ENCODE measurements at regions of chr12 and their contacts with region 1.

Region 1: DNA sequence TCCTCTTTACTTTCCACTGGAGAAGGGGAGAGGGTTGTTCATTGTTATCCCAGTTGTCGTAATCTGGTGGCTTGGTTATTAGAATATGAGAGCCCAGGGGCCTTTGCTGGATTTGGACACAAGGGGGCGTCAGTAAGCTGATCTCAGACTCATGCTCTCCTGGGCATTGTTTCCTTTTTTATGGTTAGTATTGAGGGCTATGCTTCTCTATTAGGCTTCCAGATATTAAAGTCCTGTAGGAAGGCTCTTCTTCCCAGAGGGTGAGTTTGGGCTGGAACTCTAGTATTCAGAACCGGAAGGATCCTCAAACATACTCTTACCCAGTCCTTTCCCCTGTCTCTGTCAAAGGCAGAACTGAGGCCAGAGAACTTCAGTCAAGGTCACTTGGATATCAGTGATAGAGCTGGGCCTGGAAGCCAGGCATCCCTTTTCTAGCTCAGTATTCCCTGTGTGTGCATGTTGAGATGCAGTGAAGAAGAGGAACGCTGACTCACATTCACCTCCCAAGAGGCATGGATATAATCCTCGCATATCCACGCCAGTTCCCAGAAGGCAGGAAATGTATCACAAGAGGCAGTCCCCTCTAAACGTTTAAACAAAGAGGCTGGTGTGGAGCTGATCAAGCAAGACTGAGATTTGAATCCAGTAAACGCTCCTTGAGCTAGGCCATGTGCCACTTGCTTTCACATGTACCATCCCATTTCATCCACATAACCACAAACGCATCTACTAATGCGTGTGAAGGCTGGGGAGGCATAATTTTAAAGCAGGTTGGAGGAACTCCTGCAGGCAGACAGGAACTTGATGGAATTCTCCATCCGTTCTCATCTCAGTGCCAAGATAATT is 41.6 kb downstream of the UBE3B start:
- DNase-seq: peak in 1 of 2 donors; percentile 42
- ATAC-seq: peak; percentile 72 to 82
- H3K4me3 ChIP-seq: no peak overlapping the region
- H3K27ac ChIP-seq: peak overlapping the region; percentile 10 to 64 (median 46)
- H3K4me1 ChIP-seq: peaks cover 0 to 8% of the 10 kb centered on the region in 2 donors
- H3K27me3 ChIP-seq: no peaks in the 10 kb centered on the region
- CTCF ChIP-seq: peak; percentile 39 to 80 (median 62)
- POLR2A ChIP-seq: no peak

Region 2: DNA sequence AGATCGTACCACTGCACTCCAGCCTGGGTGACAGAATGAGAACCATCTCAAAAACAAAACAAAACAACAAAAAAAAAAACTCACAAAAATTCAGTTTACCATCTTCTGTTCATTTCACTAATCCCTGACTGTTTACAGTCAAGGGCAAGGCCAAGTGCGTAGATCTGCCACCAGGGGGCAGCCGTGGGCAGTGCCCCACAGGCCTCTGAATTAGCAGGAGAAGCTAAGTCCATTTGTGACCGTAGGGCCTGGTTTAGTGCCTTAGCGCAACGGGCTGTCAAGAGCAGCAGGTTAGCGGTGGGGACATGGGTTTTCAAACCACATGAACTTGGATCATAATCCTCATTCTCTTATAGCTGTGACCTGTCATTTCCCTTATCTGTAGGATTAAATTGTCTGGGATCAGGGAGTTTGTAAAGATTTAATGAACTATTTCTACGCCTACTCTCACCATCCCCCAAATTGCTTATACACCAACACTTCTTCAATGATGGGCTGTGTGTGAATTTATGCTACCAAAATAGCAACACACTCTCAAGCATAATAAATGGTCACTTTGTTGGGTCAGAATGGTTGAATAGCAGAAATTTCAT is 90.9 kb before region 1 on chr12:
- in situ Hi-C with region 1: no loop called
- intact Hi-C with region 1: loop called (anchors 5 kb)
- DNase-seq: peak; percentile 33 to 66
- ATAC-seq: peak; percentile 87 to 93
- H3K4me3 ChIP-seq: no peak overlapping the region
- H3K27ac ChIP-seq: no peak overlapping the region
- H3K4me1 ChIP-seq: peaks cover 0 to 8% of the 10 kb centered on the region in 2 donors
- H3K27me3 ChIP-seq: no peaks in the 10 kb centered on the region
- CTCF ChIP-seq: peak; percentile 70 to 97 (median 80)
- POLR2A ChIP-seq: no peak

Region 3: DNA sequence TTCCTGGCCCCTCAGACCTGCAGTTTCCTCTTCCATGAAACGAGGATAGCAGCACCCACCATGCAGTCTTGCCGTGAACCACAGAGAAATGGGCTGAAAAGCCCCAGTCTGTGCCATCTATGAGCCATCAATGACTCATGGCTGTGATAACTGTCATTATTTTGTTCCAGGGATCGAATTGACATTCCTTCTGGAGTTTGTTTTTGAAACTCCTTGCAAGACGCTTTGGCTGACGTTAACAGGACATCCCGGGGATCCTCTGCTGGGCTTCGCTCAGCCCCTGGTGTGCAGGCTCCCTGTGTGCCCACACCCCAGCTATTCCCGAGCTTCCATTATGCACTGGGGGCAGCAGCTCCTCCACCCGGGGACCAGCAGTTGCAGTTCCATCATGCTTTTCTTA is 20.5 kb after region 1 on chr12:
- in situ Hi-C with region 1: no loop called
- intact Hi-C with region 1: no loop called
- DNase-seq: no peak
- ATAC-seq: no peak
- H3K4me3 ChIP-seq: no peak overlapping the region
- H3K27ac ChIP-seq: no peak overlapping the region
- H3K4me1 ChIP-seq: no peaks in the 10 kb centered on the region
- H3K27me3 ChIP-seq: no peaks in the 10 kb centered on the region
- CTCF ChIP-seq: no peak
- POLR2A ChIP-seq: no peak

Region 4: GRCh38 chr12:109597795-109598427 is 78.9 kb after region 1 on chr12:
- in situ Hi-C with region 1: no loop called
- intact Hi-C with region 1: loop called (anchors 5 kb)
- DNase-seq: peak; percentile 76 to 81
- ATAC-seq: peak; percentile 53 to 60
- H3K4me3 ChIP-seq: no peak overlapping the region
- H3K27ac ChIP-seq: peak overlapping the region; percentile 8 to 61 (median 45)
- H3K4me1 ChIP-seq: peaks cover 22 to 31% of the 10 kb centered on the region in 2 donors
- H3K27me3 ChIP-seq: no peaks in the 10 kb centered on the region
- CTCF ChIP-seq: peak; percentile 94 to 98 (median 95)
- POLR2A ChIP-seq: no peak

Region 5: DNA sequence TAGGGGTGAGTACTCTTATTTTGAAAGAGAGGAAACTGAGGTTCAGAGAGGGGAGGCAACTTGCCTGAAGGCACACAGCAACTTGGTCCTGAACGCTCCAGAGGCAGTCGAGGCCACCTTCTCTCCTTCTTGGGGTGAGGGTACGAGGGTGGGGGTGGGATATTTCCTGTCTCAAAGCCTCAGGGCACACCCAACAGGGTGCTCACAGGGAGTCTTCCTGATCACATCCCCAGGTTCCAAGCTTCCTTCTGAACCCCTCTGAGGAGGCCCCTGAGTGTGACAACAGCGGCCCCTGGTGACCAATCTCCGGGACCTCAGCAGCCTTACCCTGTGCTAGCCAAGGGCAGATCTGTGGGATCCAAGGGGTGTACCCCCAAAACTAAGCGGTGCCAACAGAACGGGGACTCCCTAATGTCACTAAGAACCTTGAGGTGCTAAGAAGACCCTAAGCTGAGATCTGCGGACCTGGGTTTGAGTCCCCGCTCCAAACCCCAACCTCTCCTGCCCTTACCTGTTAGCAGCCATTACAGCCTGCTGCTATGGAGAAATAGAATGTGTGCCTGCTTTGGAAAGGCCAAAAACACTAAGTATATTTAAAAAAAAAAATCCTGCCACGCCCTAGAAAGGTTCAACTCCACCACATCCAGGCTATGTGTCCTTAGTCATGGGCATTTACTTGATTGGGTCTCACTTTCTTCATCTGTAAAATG is 256.3 kb after region 1 on chr12:
- in situ Hi-C with region 1: loop called in 3 of 4 experiments (anchors 5 to 10 kb)
- intact Hi-C with region 1: loop called (anchors 1 kb)
- DNase-seq: peak; percentile 28 to 60
- ATAC-seq: peak; percentile 69 to 79
- H3K4me3 ChIP-seq: no peak overlapping the region
- H3K27ac ChIP-seq: no peak overlapping the region
- H3K4me1 ChIP-seq: peaks cover 7 to 12% of the 10 kb centered on the region in 2 donors
- H3K27me3 ChIP-seq: no peaks in the 10 kb centered on the region
- CTCF ChIP-seq: peak; percentile 85 to 94 (median 89)
- POLR2A ChIP-seq: no peak

Region 6: GRCh38 chr12:109880016-109880931 is 361.2 kb after region 1 on chr12 and contains the start of gene GLTP:
- in situ Hi-C with region 1: no loop called
- intact Hi-C with region 1: loop called (anchors 2 kb)
- DNase-seq: peak; percentile 61 to 76
- ATAC-seq: peak; percentile 91 to 96
- H3K4me3 ChIP-seq: peak within 1 kb of the TSS; percentile 66 to 94 (median 83)
- H3K27ac ChIP-seq: peak within 1 kb of the TSS; percentile 60 to 81 (median 78)
- H3K4me1 ChIP-seq: peaks cover 17 to 20% of the 10 kb centered on the region in 2 donors
- H3K27me3 ChIP-seq: no peaks in the 10 kb centered on the region
- CTCF ChIP-seq: peak in 4 of 5 experiments; percentile 85 to 98 (median 88)
- POLR2A ChIP-seq: peak; percentile 63 to 67
- total RNA-seq, gene GLTP: 18.3 to 34.0 (median 22.4) TPM

Measured in gastrocnemius medialis (tissue), 4 donors.